CD8-positive, alpha-beta T cell (primary cell): ENCODE measurements at regions of chr9 and their contacts with region 1.

Region 1: DNA sequence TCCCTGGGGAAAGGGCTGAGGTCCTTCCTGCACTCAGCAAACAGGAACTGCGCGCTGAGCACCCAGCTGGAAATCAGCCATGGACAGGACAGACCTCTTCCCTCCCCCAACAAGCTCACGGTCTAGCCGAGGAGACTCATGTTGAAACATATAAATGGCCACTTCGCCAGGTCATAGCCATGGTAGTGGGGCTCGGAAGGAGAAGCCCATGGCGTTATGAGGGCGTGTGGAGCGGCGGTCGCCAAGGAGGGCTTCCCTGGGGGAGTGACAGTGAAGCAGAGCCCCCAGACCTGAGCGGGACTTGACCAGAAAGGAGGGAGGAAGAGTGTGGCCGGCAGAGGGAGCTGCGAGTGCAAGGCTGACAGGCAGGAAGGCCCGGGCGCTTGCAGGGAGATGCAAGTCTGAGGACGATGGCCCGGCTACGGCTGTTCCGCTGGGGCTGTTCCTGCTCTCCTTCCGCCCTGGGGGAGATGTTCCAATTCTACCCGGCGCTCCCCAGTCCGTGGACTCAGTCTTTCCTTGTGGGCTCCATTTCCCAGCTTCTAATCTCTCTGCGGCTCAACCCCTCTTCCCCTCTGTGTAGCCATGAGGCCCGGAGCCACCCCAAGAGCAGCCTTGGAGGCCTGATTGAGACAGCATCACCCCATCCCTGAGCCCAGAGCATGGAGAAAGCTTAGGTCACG is 43.9 kb upstream of the PRRC2B start:
- DNase-seq: peak; percentile 75 to 93 (median 88)
- ATAC-seq: peak; percentile 99
- H3K4me3 ChIP-seq: no peak overlapping the region
- H3K4me3 Mint-ChIP-seq: peak overlapping the region; percentile 43
- H3K27ac ChIP-seq: no peak overlapping the region
- H3K27ac Mint-ChIP-seq: peak overlapping the region; percentile 49
- H3K4me1 ChIP-seq: peaks cover 9% of the 10 kb centered on the region
- H3K4me1 Mint-ChIP-seq: peaks cover 6% of the 10 kb centered on the region
- H3K27me3 ChIP-seq: no peaks in the 10 kb centered on the region
- H3K27me3 Mint-ChIP-seq: peaks cover 3% of the 10 kb centered on the region
- CTCF ChIP-seq: peak; percentile 81

Region 2: DNA sequence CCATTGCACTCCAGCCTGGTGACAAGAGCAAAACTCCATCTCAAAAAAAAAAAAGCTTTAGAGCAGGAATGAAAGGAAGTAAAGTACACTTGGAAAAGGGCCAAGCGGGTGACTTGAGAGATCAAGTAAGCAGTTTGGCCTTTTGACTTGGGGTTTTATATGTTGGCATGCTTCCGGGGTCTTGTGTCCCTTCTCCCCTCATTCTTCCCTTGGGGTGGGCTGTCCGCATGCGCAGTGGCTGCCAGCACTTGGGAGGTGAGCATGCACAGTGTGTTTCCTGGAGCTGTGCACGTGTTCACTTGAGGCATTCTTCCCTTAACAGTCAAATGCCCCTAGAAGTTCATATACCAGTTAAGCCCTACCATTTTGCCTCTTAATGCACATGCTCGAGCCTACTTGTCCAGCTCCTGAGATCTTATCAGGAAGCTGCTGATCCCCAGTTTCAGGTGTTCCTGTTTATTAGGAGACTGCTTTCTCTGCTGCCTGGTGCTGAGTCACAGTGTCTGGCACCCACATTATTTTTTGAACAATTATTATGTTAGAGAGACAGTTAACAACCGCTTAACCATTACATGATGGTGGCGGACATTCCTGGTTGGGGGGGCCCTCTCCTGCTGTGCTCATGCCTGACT is 11.3 kb after region 1 on chr9:
- CTCF ChIA-PET with region 1: interaction called, 19 read pairs
- POLR2A ChIA-PET with region 1: no interaction called
- intact Hi-C with region 1: no loop called
- DNase-seq: peak in 8 of 9 experiments; percentile 14 to 68 (median 40)
- ATAC-seq: peak; percentile 22
- H3K4me3 ChIP-seq: peak overlapping the region in 1 of 2 experiments; percentile 27
- H3K4me3 Mint-ChIP-seq: peak overlapping the region; percentile 73
- H3K27ac ChIP-seq: no peak overlapping the region
- H3K27ac Mint-ChIP-seq: peak overlapping the region; percentile 88
- H3K4me1 ChIP-seq: peaks cover 28% of the 10 kb centered on the region
- H3K4me1 Mint-ChIP-seq: peaks cover 33% of the 10 kb centered on the region
- H3K27me3 ChIP-seq: no peaks in the 10 kb centered on the region
- H3K27me3 Mint-ChIP-seq: no peaks in the 10 kb centered on the region
- CTCF ChIP-seq: no peak

Region 3: DNA sequence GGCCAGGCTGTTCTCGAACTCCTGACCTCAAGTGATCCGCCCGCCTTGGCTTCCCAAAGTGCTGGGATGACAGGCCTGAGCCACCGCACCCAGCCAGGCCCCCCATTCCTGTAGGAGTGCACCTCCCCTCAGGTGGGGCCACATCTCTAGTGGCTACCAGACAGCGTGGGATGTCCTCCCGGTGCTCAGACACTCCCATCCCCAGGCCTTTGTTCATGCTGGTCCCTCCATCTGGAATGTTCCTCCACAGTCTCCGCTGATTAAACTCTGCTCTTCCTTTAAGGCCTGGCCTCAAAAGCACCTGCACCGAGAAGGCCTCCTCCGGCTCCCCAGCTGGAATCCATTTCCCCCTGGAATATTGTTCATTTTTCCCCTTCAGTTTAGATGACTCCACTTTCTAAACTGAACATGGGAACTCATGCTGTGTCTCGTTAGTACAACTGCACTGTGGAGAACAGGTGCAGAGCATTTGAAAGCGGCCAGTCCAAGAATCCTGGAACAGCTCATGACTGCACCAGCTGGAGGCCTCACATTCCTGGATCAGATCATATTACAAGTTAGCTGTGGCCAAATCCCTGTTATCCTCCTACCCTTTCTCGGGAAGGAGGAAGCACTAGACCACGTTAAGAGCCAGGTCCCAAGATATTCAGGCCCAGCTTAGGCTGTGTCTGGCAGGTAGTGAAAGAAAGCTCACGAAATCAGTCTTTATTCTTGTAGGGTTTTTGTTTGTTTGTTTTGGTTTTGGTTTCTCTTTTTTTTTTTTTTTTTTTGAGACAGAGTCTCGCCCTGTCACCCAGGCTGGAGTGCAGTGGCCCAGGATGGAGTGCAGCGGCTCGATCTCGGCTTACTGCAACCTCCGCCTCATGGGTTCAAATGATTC is 33.1 kb after region 1 on chr9:
- CTCF ChIA-PET with region 1: interaction called, 14 read pairs
- POLR2A ChIA-PET with region 1: no interaction called
- intact Hi-C with region 1: no loop called
- DNase-seq: no peak
- ATAC-seq: no peak
- H3K4me3 ChIP-seq: no peak overlapping the region
- H3K4me3 Mint-ChIP-seq: no peak overlapping the region
- H3K27ac ChIP-seq: no peak overlapping the region
- H3K27ac Mint-ChIP-seq: no peak overlapping the region
- H3K4me1 ChIP-seq: no peaks in the 10 kb centered on the region
- H3K4me1 Mint-ChIP-seq: peaks cover 1% of the 10 kb centered on the region
- H3K27me3 ChIP-seq: no peaks in the 10 kb centered on the region
- H3K27me3 Mint-ChIP-seq: no peaks in the 10 kb centered on the region
- CTCF ChIP-seq: no peak

Region 4: DNA sequence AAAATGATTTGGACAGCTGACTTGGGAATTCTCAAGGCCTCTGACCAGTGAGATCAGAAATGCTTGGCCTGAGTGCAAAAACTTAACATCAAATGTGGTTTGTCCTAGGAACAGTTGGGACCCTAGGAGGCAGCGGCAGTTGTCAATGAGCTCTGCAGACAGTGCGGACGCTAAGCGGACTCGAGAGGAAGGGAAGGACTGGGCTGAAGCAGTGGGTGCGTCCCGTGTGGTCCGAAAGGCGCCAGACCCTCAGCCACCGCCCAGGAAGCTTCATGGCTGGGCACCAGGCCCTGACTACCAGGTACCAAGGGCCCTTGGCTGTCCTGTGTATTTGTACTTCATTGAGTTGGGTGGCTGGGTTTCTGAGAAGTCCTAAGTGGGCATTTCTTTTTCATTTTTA is 109.0 kb after region 1 on chr9:
- CTCF ChIA-PET with region 1: interaction called, 10 read pairs
- POLR2A ChIA-PET with region 1: no interaction called
- intact Hi-C with region 1: no loop called
- DNase-seq: no peak
- ATAC-seq: no peak
- H3K4me3 ChIP-seq: no peak overlapping the region
- H3K4me3 Mint-ChIP-seq: no peak overlapping the region
- H3K27ac ChIP-seq: no peak overlapping the region
- H3K27ac Mint-ChIP-seq: peak overlapping the region; percentile 15
- H3K4me1 ChIP-seq: no peaks in the 10 kb centered on the region
- H3K4me1 Mint-ChIP-seq: peaks cover 19% of the 10 kb centered on the region
- H3K27me3 ChIP-seq: no peaks in the 10 kb centered on the region
- H3K27me3 Mint-ChIP-seq: no peaks in the 10 kb centered on the region
- CTCF ChIP-seq: no peak

Region 5: GRCh38 chr9:131559421-131560000 is 209.5 kb after region 1 on chr9:
- CTCF ChIA-PET with region 1: interaction called, 11 read pairs
- POLR2A ChIA-PET with region 1: no interaction called
- intact Hi-C with region 1: loop called in 1 of 2 experiments (anchors 10 kb)
- DNase-seq: peak in 1 of 9 experiments; percentile 38
- ATAC-seq: no peak
- H3K4me3 ChIP-seq: no peak overlapping the region
- H3K4me3 Mint-ChIP-seq: no peak overlapping the region
- H3K27ac ChIP-seq: no peak overlapping the region
- H3K27ac Mint-ChIP-seq: no peak overlapping the region
- H3K4me1 ChIP-seq: no peaks in the 10 kb centered on the region
- H3K4me1 Mint-ChIP-seq: peaks cover 4% of the 10 kb centered on the region
- H3K27me3 ChIP-seq: peaks cover 0 to 9% of the 10 kb centered on the region in 2 experiments
- H3K27me3 Mint-ChIP-seq: peaks cover 14% of the 10 kb centered on the region
- CTCF ChIP-seq: no peak